Heart right ventricle (tissue), 16 donors: ENCODE measurements at regions of chr2 and their contacts with region 1.

Region 1: DNA sequence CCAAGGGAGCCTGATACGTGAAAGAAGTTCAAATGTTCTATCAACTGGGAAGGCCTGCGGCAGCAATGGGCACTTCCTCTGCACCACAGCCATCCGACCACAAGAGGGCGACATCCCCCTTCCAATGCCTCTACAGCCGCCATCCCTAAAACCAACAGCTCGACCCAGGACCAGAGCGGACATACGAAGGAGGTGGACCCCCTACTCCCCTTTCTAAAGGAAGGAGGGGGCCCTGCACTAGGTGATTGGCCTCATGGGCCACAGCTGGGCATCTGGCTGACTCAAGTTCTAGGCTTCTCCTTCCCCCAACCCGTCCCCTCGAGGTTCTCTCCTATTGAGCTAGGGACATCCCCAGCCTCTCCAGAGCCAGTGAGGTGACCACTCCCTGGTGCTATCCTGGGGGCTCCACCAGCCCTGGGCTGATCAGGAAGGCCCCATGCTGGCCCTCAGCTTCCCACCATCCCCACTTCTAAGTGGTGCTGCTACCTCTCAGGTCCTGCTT is 217.2 kb downstream of the TNS1 start:
- DNase-seq: peak; percentile 79 to 82
- ATAC-seq: peak; percentile 66 to 80 (median 72)
- H3K4me3 ChIP-seq: no peak overlapping the region
- H3K27ac ChIP-seq: no peak overlapping the region
- H3K4me1 ChIP-seq: peaks cover 0 to 28% (median 22%) of the 10 kb centered on the region in 9 donors
- H3K27me3 ChIP-seq: no peaks in the 10 kb centered on the region
- CTCF ChIP-seq: peak; percentile 88 to 98 (median 97)

Region 2: DNA sequence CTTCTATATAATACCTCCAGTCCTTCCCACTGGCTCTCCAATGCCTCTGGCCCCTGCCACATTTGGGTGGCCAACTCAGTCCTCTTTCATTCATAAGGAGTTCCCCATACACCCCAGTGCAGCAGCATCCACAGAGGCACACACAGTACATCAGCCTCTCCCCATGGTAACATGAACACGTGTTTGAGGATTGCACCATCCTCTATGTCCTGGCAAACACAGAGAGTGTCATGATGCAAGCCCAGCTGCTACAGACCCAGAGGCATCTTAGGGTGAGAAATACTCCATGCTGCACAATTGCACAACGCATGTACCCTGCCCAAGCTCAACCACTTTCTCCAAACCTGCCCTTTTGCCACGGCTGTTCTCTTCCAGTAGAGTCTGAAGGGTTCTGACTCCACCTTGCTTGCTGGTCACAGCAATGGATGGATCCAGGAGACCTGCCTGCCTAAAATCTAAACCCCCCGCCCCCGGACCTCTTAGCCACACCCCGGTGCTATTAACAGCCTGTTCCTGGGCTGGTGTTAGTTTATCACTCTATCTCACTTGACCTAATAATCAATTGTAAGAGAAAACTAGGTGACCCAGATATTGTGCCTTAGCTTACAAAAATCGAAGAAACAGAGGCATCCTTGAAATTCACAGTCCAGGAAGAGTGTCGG is 1101.6 kb before region 1 on chr2:
- intact Hi-C with region 1: no loop called
- DNase-seq: no peak
- ATAC-seq: peak in 7 of 8 donors; percentile 22 to 83 (median 55)
- H3K4me3 ChIP-seq: no peak overlapping the region
- H3K27ac ChIP-seq: peak overlapping the region in 6 of 10 donors; percentile 18 to 92 (median 36)
- H3K4me1 ChIP-seq: peaks cover 22 to 98% (median 68%) of the 10 kb centered on the region in 9 donors
- H3K27me3 ChIP-seq: peaks cover 0 to 17% (median 0%) of the 10 kb centered on the region in 7 donors
- CTCF ChIP-seq: no peak

Region 3: GRCh38 chr2:217622205-217623060 is 163.2 kb before region 1 on chr2:
- intact Hi-C with region 1: no loop called
- DNase-seq: peak in 1 of 2 donors; percentile 56
- ATAC-seq: peak; percentile 66 to 89 (median 84)
- H3K4me3 ChIP-seq: no peak overlapping the region
- H3K27ac ChIP-seq: peak overlapping the region in 7 of 10 donors; percentile 17 to 80 (median 64)
- H3K4me1 ChIP-seq: peaks cover 0 to 39% (median 24%) of the 10 kb centered on the region in 9 donors
- H3K27me3 ChIP-seq: no peaks in the 10 kb centered on the region
- CTCF ChIP-seq: no peak

Region 4: DNA sequence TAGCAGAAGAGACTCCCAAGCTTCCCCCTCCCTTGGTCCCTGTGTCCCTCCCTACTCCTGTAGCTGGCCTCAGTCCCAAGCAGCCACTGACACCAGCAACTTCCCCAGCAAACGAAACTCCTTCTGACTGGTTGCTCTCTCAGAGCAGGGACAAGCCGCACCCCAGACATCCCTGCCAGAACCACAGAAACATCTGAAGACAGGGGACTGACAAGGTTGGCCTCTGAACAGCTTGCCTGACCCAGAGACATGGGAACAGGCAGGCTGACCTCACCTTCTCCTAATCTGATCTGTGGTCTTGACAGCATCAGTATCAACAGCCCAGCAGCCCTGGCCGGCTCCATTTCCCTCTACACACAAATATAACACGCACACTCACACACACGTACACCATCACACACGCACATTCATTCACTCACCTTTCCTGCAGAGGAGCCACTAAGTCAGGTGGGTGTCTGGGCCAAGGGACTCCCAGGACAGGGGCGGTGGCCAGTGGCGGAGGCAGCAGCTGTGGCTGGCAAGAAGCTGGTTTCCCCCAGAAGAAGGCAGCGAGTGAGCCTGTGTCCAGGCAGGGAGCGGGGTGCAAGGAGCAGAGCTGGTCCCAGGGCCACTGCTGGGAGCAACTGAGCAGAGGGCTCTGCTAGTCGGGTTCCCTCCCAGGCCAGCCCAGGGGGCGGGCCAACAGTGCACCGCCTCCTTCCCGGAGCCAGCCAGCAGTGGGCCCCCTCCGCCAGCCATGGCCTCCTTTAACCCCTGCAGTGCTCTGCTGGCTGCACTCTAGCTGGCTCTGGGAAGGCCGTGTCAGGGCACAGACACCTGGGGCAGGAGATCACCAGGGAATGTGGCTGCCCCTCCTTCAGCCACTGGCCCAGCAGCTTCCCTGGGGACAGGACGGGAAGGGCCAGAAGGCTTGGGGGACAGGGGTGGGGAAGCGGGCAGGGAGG is 158.1 kb after region 1 on chr2:
- intact Hi-C with region 1: loop called in 1 of 10 experiments (anchors 5 kb)
- DNase-seq: peak; percentile 90 to 91
- ATAC-seq: peak; percentile 86 to 92 (median 90)
- H3K4me3 ChIP-seq: peak overlapping the region; percentile 54 to 98 (median 79)
- H3K27ac ChIP-seq: peak overlapping the region; percentile 84 to 99 (median 96)
- H3K4me1 ChIP-seq: peaks cover 24 to 80% (median 53%) of the 10 kb centered on the region in 9 donors
- H3K27me3 ChIP-seq: no peaks in the 10 kb centered on the region
- CTCF ChIP-seq: peak; percentile 9 to 70 (median 46)

Region 5: GRCh38 chr2:217993817-217994463 is 208.3 kb after region 1 on chr2:
- intact Hi-C with region 1: loop called in 8 of 10 experiments (anchors 1 to 2 kb)
- DNase-seq: peak; percentile 71 to 78
- ATAC-seq: peak in 7 of 8 donors; percentile 36 to 75 (median 55)
- H3K4me3 ChIP-seq: no peak overlapping the region
- H3K27ac ChIP-seq: peak overlapping the region in 5 of 10 donors; percentile 10 to 52 (median 22)
- H3K4me1 ChIP-seq: peaks cover 12 to 48% (median 28%) of the 10 kb centered on the region in 9 donors
- H3K27me3 ChIP-seq: no peaks in the 10 kb centered on the region
- CTCF ChIP-seq: peak; percentile 68 to 85 (median 80)

Region 6: DNA sequence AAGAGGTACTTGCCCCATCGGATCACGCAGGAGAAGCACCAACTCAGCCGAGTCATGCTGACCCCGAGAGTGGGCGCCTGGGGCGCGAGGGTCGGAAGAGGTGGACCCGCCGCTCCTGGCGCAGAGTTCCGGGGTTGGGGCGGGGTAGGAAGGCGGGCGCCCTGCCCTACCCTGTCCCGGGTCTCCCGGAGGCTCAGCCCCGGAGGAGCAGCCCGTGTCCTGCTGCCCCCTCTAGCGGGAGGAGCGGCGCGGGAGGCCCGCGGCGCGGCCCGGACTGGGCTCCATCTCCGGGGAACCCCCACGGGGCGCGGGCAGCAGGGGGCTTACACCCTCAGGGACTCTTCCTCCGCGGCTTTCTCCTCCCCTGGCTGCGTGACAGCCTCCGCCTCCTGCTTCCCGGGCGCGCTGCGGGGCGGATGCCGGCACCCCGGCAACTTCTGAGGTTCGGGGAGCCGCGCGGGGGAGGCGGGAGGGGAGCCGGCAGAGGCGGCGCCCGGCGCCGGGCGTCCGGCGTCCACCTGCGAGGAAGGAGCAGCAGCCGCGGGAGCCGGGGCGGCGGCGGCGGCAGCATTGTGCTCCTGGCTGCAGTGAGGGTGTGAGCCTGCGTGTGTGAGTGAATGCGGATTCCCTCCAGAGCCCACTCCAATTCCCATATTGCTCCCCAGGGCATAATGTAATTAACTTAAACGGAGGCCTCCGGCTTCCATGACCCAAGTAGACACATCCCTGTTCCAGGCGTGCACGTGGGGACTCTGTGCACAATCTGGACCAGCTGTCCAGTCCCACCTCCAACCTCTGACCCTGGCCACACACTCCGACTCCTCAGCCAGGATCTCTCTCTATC is 224.8 kb after region 1 on chr2:
- intact Hi-C with region 1: no loop called
- DNase-seq: peak in 1 of 2 donors; percentile 68
- ATAC-seq: peak; percentile 69 to 86 (median 80)
- H3K4me3 ChIP-seq: peak overlapping the region; percentile 35 to 60 (median 58)
- H3K27ac ChIP-seq: peak overlapping the region in 3 of 10 donors; percentile 13 to 47 (median 36)
- H3K4me1 ChIP-seq: peaks cover 7 to 42% (median 25%) of the 10 kb centered on the region in 9 donors
- H3K27me3 ChIP-seq: peaks cover 0 to 31% (median 0%) of the 10 kb centered on the region in 7 donors
- CTCF ChIP-seq: peak; percentile 28 to 79 (median 55)

Region 7: GRCh38 chr2:218063486-218063885 is 277.9 kb after region 1 on chr2:
- intact Hi-C with region 1: loop called in 9 of 10 experiments (anchors 1 to 10 kb)
- DNase-seq: no peak
- ATAC-seq: no peak
- H3K4me3 ChIP-seq: no peak overlapping the region
- H3K27ac ChIP-seq: no peak overlapping the region
- H3K4me1 ChIP-seq: peaks cover 0 to 22% (median under 1%) of the 10 kb centered on the region in 9 donors
- H3K27me3 ChIP-seq: peaks cover 0 to 18% (median 4%) of the 10 kb centered on the region in 7 donors
- CTCF ChIP-seq: no peak